Mammary epithelial cell (primary cell): ENCODE measurements at regions of chr16 and their contacts with region 1.

Region 1: GRCh38 chr16:19375561-19376158 is 42.0 kb upstream of the TMC5 start:
- DNase-seq: peak; percentile 21
- H3K4me3 ChIP-seq: no peak overlapping the region
- H3K27ac ChIP-seq: no peak overlapping the region
- H3K4me1 ChIP-seq: no peaks in the 10 kb centered on the region
- H3K27me3 ChIP-seq: peaks cover 3% of the 10 kb centered on the region
- CTCF ChIP-seq: peak; percentile 87 to 93

Region 2: GRCh38 chr16:18983565-18984424 is 391.9 kb before region 1 on chr16 and contains the start of gene TMC7:
- CTCF ChIA-PET with region 1: no interaction called
- dilution Hi-C with region 1: no loop called
- in situ Hi-C with region 1: no loop called
- intact Hi-C with region 1: loop called (anchors 2 kb)
- DNase-seq: peak; percentile 83
- H3K4me3 ChIP-seq: peak within 1 kb of the TSS; percentile 56 to 82 (median 76)
- H3K27ac ChIP-seq: peak within 1 kb of the TSS; percentile 75
- H3K4me1 ChIP-seq: peaks cover 6% of the 10 kb centered on the region
- H3K27me3 ChIP-seq: no peaks in the 10 kb centered on the region
- CTCF ChIP-seq: peak; percentile 57 to 96
- total RNA-seq, gene TMC7: 13.7 to 17.5 TPM

Region 3: DNA sequence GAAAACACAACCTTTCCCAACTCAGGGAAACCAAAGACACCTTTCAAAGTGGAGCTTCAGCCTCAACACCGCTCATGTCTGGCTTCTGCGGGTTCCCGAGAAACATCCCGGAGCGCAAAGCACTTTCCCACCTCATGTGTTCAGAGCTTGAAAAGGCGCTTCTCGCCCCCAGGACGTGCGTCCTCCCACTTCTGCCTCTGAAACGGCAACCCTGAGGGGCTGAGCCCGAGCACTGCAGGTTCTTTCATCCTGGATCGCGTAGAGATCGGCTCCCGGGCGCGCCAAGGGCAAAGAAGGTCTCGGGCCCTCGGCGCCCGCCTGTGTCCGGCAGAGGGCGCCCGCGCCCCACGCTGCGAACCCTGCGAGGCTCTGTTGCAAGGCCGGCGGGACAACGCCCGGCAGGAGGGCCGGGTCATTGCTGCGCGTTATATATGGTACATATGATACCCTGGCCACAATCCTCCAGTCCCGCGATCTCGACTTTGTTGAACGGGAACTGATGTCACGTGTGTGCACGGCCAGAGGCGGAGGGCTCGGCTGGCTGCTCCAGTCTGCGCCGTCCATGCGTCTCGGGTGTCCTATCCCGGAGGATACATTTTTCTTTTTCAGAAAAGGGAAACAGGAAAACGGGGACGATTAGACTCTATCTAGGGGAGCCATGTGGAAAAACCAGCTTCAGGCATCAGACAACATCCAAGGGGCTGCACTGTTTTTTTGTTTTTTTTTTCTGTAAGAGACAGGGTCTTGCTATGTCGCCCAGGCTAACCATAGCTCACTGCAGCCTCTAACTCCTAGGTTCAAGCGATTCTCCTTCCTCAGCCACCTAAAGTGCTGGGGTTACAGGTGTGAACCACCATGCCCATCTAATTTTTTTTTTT is 289.1 kb before region 1 on chr16:
- CTCF ChIA-PET with region 1: no interaction called
- dilution Hi-C with region 1: no loop called
- in situ Hi-C with region 1: loop called (anchors 5 kb)
- intact Hi-C with region 1: loop called (anchors 1 kb)
- DNase-seq: peak; percentile 74
- H3K4me3 ChIP-seq: peak overlapping the region; percentile 28 to 48 (median 34)
- H3K27ac ChIP-seq: no peak overlapping the region
- H3K4me1 ChIP-seq: peaks cover 12% of the 10 kb centered on the region
- H3K27me3 ChIP-seq: no peaks in the 10 kb centered on the region
- CTCF ChIP-seq: peak; percentile 73 to 99

Region 4: DNA sequence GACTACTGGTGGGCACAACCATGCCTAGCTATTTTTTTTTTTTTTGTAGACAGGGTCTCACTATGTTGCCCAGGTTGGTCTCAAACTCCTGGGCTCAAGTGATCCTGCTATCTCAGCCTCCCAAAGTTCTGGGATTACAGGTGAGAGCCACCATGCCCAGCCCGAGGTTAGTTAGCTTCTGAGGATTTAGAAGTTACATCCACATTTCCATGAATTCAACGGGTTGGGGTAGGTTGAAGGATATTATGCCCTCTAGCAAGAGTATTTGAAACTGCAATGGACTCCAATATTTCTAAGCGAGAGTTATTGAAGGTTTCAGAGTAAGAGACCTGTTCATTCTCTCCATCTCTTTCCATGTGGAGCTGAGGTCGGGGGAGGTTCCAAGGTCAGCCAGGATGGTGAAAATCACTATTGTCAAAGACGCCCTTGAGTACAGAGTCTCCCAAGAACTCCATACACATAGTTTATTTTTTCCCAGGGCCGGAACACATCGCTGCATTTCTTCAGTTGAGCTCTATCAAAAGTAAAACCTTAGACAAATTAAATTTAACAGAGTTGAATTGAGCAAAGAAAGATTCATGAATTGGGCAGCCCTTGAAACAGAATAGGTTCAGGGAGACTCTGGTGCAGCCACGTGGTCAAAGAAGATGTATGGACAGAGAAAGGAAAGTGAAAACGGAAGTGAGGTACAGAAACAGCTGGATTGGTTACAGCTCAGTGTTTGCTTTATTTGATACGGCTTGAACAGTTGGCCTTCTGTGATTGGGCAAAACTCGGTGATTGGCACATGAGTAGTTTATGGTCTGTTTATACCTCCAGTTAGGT is 280.9 kb before region 1 on chr16:
- CTCF ChIA-PET with region 1: no interaction called
- dilution Hi-C with region 1: no loop called
- in situ Hi-C with region 1: loop called (anchors 5 kb)
- intact Hi-C with region 1: no loop called
- DNase-seq: no peak
- H3K4me3 ChIP-seq: no peak overlapping the region
- H3K27ac ChIP-seq: no peak overlapping the region
- H3K4me1 ChIP-seq: peaks cover 7% of the 10 kb centered on the region
- H3K27me3 ChIP-seq: no peaks in the 10 kb centered on the region
- CTCF ChIP-seq: peak in 1 of 2 donors; percentile 5

Region 5: DNA sequence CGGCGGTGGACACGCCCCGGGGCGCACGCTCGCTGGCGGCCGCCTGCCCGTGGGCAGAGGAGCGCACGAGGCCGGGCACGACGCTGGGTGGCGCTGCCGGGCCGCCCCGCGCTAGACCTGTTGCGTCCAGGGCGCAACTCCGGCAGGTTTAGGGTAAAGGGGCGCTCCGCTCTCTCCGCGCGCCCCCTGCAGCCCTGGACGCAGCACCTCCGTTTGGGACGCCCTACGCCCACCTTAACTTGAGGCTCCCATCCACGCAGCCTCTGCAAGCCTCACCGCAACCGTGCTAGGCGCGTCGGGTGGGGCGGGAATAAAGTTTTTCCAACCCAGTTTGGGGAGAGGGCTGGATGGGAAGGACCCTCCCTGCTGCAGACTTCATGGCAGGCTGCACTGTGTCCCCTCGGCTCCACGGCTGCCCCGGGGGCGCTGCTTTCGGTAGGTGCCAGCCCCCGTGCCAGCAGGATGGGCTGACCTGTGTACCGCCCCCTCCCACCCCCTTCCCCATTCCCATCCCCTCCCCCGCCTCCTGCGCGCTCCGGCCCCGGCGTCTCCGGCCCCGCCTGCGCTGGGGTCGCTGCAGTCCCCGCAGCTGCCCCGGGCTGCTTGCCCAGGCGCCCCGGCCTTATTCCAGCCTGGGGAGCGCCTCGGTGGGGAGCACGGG is 207.8 kb before region 1 on chr16 and contains the start of gene SYT17:
- CTCF ChIA-PET with region 1: no interaction called
- dilution Hi-C with region 1: no loop called
- in situ Hi-C with region 1: no loop called
- intact Hi-C with region 1: loop called (anchors 1 kb)
- DNase-seq: peak; percentile 39
- H3K4me3 ChIP-seq: peak within 1 kb of the TSS in 2 of 3 experiments; percentile 37 to 40
- H3K27ac ChIP-seq: no peak within 1 kb of the TSS
- H3K4me1 ChIP-seq: peaks cover 17% of the 10 kb centered on the region
- H3K27me3 ChIP-seq: peaks cover 12% of the 10 kb centered on the region
- CTCF ChIP-seq: peak; percentile 42 to 56
- total RNA-seq, gene SYT17: 0.17 to 0.24 TPM

Region 6: DNA sequence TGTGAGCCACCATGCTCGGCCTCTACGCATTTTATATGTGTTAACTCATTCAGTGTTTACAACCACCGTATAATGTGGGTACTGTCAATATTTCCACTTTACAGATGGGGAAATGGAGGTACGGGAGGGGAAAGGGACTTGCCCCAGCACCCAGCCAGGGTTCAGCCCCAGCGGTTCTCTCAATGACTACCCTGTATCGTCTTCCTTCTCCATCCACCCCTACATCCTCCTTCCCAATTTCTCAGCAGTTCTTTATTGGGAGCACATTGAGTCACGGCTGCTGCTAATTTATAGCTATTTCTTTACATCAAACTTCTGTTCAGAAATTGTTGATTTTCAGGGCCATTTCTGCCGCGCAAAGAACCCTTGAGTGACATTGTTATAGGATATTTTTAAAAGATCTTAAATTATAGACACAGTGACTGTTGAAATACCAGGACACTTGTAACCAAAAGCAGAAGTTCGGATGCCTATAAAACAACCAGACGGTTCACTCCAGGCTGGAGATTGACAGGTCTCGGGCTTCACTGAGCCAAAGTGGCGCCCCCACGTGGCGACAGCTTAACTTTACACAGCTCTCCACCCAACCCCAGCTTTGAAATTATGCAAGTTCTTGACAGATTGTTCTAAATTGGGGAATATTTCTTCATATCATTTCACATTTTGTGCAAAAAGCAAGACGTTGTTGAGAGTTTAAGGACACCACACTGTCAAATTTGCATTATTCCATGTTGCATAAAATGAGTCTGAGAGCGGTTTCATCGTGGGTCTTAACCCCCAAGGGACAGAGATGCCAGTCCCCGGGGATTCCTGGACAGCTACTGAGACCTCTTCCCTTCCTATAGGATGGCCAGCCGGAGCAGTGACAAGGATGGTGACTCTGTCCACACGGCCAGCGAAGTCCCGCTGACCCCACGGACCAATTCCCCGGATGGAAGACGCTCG is 195.8 kb before region 1 on chr16:
- CTCF ChIA-PET with region 1: no interaction called
- dilution Hi-C with region 1: no loop called
- in situ Hi-C with region 1: no loop called
- intact Hi-C with region 1: loop called (anchors 5 kb)
- DNase-seq: peak; percentile 11
- H3K4me3 ChIP-seq: no peak overlapping the region
- H3K27ac ChIP-seq: no peak overlapping the region
- H3K4me1 ChIP-seq: no peaks in the 10 kb centered on the region
- H3K27me3 ChIP-seq: no peaks in the 10 kb centered on the region
- CTCF ChIP-seq: peak; percentile 73 to 78

Region 7: GRCh38 chr16:19210280-19210924 is 165.3 kb before region 1 on chr16:
- CTCF ChIA-PET with region 1: no interaction called
- dilution Hi-C with region 1: no loop called
- in situ Hi-C with region 1: no loop called
- intact Hi-C with region 1: loop called (anchors 5 kb)
- DNase-seq: no peak
- H3K4me3 ChIP-seq: no peak overlapping the region
- H3K27ac ChIP-seq: no peak overlapping the region
- H3K4me1 ChIP-seq: no peaks in the 10 kb centered on the region
- H3K27me3 ChIP-seq: no peaks in the 10 kb centered on the region
- CTCF ChIP-seq: no peak

Region 8: GRCh38 chr16:19419691-19420060 is 44.0 kb after region 1 on chr16:
- CTCF ChIA-PET with region 1: no interaction called
- dilution Hi-C with region 1: no loop called
- in situ Hi-C with region 1: no loop called
- intact Hi-C with region 1: no loop called
- DNase-seq: peak; percentile 85
- H3K4me3 ChIP-seq: no peak overlapping the region
- H3K27ac ChIP-seq: no peak overlapping the region
- H3K4me1 ChIP-seq: no peaks in the 10 kb centered on the region
- H3K27me3 ChIP-seq: no peaks in the 10 kb centered on the region
- CTCF ChIP-seq: no peak

Region 9: DNA sequence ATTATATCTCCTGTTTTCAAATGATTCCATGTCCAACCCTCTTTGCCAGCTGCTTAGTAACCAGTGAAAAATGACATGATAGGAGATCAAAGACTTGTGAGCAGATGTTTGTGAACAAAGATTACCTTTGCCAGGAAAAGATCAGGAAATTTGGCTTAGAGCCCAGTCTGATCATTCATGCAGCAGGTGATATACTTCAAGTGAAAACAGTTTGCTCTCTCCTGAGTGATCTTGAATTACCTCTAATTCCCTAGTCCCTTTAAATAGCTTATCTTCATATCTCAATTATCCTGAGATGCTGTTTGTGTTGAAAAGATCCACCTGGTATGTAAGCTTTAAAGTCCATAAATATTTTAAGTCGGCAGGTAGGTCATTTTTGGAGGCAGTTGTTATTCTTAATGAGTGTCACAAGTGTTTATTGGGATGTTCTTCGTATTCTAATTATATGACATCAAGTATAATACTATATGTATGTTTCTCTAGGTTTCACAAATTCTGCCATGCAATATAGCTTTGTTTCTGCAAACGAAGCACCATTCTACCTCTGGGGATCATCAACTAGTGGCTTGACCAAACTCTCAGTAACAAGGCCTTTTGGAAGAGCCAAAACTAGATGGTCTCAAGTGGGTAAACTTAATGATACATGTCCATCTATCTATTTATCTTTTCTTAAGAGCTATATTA is 166.6 kb after region 1 on chr16:
- CTCF ChIA-PET with region 1: no interaction called
- dilution Hi-C with region 1: no loop called
- in situ Hi-C with region 1: no loop called
- intact Hi-C with region 1: no loop called
- DNase-seq: no peak
- H3K4me3 ChIP-seq: no peak overlapping the region
- H3K27ac ChIP-seq: no peak overlapping the region
- H3K4me1 ChIP-seq: no peaks in the 10 kb centered on the region
- H3K27me3 ChIP-seq: no peaks in the 10 kb centered on the region
- CTCF ChIP-seq: no peak